Heart right ventricle (tissue), 16 donors: ENCODE measurements at regions of chr3 and their contacts with region 1.

Region 1: GRCh38 chr3:115960799-115961198 is 337.5 kb downstream of the GAP43 start:
- DNase-seq: no peak
- ATAC-seq: peak in 3 of 8 donors; percentile 18 to 55 (median 52)
- H3K4me3 ChIP-seq: peak overlapping the region in 1 of 10 donors; percentile 22
- H3K27ac ChIP-seq: no peak overlapping the region
- H3K4me1 ChIP-seq: peaks cover 0 to 6% (median 0%) of the 10 kb centered on the region in 9 donors
- H3K27me3 ChIP-seq: no peaks in the 10 kb centered on the region
- CTCF ChIP-seq: no peak

Region 2: DNA sequence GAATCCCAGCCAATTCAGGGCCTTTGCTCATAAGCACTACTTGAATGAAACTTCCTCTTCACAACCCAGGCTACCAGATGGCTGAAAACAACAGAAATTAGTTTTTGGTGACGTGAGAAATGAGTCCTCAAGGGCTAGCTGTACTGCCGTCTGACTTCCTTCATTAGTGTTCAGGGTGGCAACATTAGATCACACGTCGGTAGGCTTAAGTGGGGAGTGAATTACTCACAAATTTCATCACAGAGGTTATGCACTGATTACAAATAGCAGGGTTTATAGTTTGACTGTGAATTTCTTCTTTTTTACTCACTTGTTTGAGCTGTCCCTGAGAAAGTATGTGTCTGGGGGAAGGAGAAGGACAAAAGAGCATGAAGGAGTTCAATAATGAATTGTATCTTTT is 59.7 kb after region 1 on chr3:
- intact Hi-C with region 1: loop called in 1 of 10 experiments (anchors 2 kb)
- DNase-seq: no peak
- ATAC-seq: no peak
- H3K4me3 ChIP-seq: no peak overlapping the region
- H3K27ac ChIP-seq: no peak overlapping the region
- H3K4me1 ChIP-seq: no peaks in the 10 kb centered on the region
- H3K27me3 ChIP-seq: no peaks in the 10 kb centered on the region
- CTCF ChIP-seq: no peak